ENCODE measurements at regions of chr19 and their contacts with region 1.

Region 1: DNA sequence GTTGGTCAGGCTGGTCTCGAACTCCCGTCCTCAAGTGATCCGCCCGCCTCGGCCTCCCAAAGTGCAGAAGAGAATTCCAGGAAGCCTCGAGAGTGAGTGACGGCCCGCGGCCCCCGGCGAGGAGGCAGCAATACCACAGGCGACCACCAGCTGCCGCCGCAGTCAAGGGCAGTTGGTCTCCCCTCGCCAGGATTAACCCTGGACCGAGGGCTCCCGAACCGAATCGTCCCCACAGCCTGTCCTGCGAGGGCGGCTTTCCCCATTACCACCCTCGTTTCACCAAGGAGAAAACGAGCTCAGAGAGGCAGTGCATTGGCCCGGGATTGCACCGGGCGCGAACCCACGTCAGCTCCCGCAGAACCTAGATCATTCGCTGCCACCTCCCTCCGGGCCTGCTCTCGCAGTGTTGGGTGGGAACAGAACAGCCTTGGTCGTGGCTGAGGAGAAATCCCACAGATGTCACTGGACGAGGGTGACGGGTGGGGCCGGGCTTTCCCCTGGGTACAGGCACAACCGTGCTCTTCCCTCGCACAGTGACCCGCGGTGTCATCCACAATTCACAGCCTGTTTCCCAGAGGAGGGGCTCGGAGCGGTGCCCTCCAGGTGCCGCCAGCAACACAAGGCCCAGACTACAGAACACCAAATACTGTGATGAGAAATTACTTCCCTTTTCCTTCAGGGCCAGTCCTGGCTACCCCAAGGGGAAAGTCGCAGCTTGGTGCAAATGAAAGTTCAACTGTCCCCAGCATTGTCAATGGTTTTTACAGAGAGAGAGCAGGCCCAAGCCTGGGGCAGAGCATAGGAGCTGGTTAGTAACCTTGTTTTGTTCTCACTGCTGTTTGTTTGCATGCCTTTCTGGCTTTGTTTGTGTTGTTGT is 24.8 kb downstream of the C2CD4C start:
- DNase-seq: no peak
- ATAC-seq: no peak
- H3K4me3 ChIP-seq: no peak overlapping the region
- H3K27ac ChIP-seq: no peak overlapping the region
- H3K4me1 ChIP-seq: no peaks in the 10 kb centered on the region
- H3K27me3 ChIP-seq: peaks cover 13 to 23% (median 18%) of the 10 kb centered on the region in 3 donors
- CTCF ChIP-seq: peak; percentile 35 to 55 (median 54)
- POLR2A ChIP-seq: no peak

Region 2: DNA sequence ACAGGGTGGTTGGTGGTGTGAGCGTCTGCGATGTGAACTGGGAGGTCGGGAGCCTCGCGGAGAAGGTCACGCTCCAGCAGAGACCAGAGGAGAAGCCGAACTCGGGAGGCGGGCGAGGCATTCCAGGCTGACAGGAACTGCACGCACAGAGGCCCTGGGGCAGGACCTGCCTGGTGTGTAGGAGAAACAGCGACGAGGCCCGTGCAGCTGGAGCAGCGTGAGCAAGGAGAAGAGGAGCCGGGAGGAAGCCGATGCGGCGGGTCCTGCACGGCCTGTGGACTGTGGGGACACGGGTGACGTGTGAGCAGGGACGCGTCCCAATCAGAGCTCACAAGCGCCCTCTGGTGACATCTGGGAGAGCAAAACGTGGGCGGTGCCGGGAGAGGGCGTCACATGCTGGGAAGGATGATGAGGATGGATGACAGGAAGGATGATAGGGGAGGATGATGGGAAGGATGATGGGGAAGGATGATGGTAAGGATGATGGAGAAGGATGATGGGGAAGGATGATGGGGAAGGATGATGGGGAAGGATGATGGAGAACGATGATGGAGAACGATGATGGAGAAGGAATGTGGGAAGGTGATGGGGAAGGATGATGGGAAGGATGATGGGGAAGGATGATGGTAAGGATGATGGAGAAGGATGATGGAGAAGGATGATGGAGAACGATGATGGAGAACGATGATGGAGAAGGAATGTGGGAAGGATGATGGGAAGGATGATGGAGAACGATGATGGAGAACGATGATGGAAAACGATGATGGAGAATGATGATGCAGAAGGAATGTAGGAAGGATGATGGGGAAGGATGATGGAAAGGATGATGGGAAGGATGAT is 96.1 kb after region 1 on chr19:
- in situ Hi-C with region 1: no loop called
- intact Hi-C with region 1: loop called (anchors 2 kb)
- DNase-seq: peak in 1 of 2 donors; percentile 58
- ATAC-seq: peak; percentile 85 to 86
- H3K4me3 ChIP-seq: peak overlapping the region; percentile 26 to 46 (median 30)
- H3K27ac ChIP-seq: peak overlapping the region in 2 of 4 donors; percentile 44 to 47
- H3K4me1 ChIP-seq: peaks cover 0 to 3% of the 10 kb centered on the region in 2 donors
- H3K27me3 ChIP-seq: peaks cover 2 to 10% (median 7%) of the 10 kb centered on the region in 3 donors
- CTCF ChIP-seq: peak; percentile 18 to 54 (median 51)
- POLR2A ChIP-seq: no peak

Region 3: GRCh38 chr19:491146-491741 is 107.1 kb after region 1 on chr19:
- in situ Hi-C with region 1: no loop called
- intact Hi-C with region 1: no loop called
- DNase-seq: peak in 1 of 2 donors; percentile 42
- ATAC-seq: no peak
- H3K4me3 ChIP-seq: no peak overlapping the region
- H3K27ac ChIP-seq: peak overlapping the region in 1 of 4 donors; percentile 54
- H3K4me1 ChIP-seq: peaks cover 6 to 13% of the 10 kb centered on the region in 2 donors
- H3K27me3 ChIP-seq: peaks cover 7 to 21% (median 11%) of the 10 kb centered on the region in 3 donors
- CTCF ChIP-seq: no peak
- POLR2A ChIP-seq: no peak

Region 4: DNA sequence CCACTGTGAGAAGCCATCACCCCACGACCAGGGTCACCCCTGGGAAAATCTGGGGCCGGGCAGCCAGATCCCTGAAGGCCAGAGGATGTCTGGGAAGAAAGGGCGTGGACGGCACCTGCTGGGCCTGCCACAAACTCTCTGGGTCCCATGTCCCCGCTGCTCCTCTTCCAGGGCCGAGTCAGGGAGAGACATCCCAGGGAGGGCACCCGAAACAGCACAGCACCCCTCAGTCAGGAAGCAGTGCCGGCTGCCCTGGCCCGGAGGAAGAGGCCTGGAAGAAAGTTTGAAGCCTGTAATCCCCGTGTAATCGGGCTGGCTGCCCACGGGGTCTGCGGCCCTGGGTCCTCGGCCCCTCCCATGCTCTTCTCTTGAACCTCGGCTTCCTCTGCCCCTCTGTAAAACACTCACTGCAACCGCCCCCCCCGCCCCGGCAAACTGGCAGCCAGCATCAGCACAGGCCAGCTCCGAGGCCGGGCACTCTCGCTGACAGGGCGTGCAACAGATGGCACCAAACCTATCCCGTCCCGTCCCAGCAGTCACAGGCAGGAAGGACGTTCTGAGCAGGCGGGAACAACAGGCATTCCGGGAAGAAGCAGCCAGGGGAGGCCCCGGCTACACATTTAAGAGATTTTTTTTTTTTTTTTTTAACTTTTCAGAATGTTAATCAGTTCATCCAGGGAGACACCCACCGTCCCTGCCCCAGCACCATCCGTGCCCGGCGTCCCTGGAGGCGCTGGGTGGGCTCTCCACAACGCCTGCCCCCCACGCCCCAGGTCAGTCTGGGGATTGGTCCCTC is 788.4 kb after region 1 on chr19:
- in situ Hi-C with region 1: no loop called
- intact Hi-C with region 1: no loop called
- DNase-seq: peak; percentile 58 to 67
- ATAC-seq: peak; percentile 67 to 69
- H3K4me3 ChIP-seq: peak overlapping the region; percentile 67 to 92 (median 73)
- H3K27ac ChIP-seq: peak overlapping the region; percentile 86 to 87 (median 87)
- H3K4me1 ChIP-seq: peaks cover 15 to 21% of the 10 kb centered on the region in 2 donors
- H3K27me3 ChIP-seq: peaks cover 0 to 11% (median 0%) of the 10 kb centered on the region in 3 donors
- CTCF ChIP-seq: no peak
- POLR2A ChIP-seq: peak; percentile 35 to 66

Measured in gastrocnemius medialis (tissue), 4 donors.